Body of pancreas (tissue), 4 donors: ENCODE measurements at regions of chr14 and their contacts with region 1.

Region 1: DNA sequence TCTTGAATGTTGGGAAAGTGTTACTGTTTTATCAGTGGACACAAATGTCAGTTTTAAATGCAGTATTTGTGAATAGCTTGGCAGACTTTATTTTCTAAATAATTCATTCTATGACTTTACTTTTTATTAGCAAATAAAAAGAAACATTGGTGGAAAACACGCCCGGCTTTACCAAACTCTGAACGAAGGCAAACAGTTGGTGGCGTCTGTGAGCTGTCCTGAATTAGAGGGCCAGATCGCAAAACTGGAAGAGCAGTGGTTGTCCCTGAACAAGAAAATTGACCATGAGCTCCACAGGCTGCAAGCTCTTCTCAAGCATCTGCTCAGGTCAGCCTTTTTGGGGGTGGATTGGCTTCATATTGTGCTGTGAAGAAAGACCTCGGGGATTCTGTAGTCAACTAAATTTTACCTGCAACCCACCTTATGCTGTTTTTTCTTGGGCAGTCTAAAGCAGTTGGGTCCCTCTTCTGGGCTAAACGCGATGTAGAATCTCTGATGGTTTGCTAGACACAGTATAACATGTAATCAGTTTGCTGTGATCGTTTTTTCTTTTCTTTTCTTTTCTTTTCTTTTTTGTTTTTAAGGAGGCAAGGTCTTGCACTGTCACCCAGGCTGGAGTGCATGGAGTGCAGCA is 156.4 kb downstream of the ESR2 start:
- DNase-seq: peak; percentile 27 to 60 (median 48)
- ATAC-seq: no peak
- H3K4me3 ChIP-seq: no peak overlapping the region
- H3K27ac ChIP-seq: no peak overlapping the region
- H3K4me1 ChIP-seq: no peaks in the 10 kb centered on the region
- H3K27me3 ChIP-seq: no peaks in the 10 kb centered on the region
- CTCF ChIP-seq: peak; percentile 10 to 66 (median 44)
- POLR2A ChIP-seq: no peak

Region 2: GRCh38 chr14:64294672-64295413 is 157.1 kb after region 1 on chr14:
- intact Hi-C with region 1: loop called (anchors 5 kb)
- DNase-seq: peak; percentile 81 to 89 (median 84)
- ATAC-seq: peak; percentile 86
- H3K4me3 ChIP-seq: peak overlapping the region in 1 of 2 donors; percentile 44
- H3K27ac ChIP-seq: no peak overlapping the region
- H3K4me1 ChIP-seq: peaks cover 19% of the 10 kb centered on the region
- H3K27me3 ChIP-seq: no peaks in the 10 kb centered on the region
- CTCF ChIP-seq: peak; percentile 79 to 92 (median 89)
- POLR2A ChIP-seq: no peak

Region 3: GRCh38 chr14:64363265-64363846 is 225.6 kb after region 1 on chr14:
- intact Hi-C with region 1: no loop called
- DNase-seq: no peak
- ATAC-seq: no peak
- H3K4me3 ChIP-seq: no peak overlapping the region
- H3K27ac ChIP-seq: no peak overlapping the region
- H3K4me1 ChIP-seq: no peaks in the 10 kb centered on the region
- H3K27me3 ChIP-seq: no peaks in the 10 kb centered on the region
- CTCF ChIP-seq: no peak
- POLR2A ChIP-seq: no peak

Region 4: GRCh38 chr14:64540208-64541157 is 402.7 kb after region 1 on chr14 and contains the start of gene HSPA2:
- intact Hi-C with region 1: no loop called
- DNase-seq: peak; percentile 99 to 100 (median 100)
- ATAC-seq: peak; percentile 94
- H3K4me3 ChIP-seq: peak within 1 kb of the TSS; percentile 46 to 87
- H3K27ac ChIP-seq: peak within 1 kb of the TSS; percentile 77 to 91 (median 89)
- H3K4me1 ChIP-seq: peaks cover 16% of the 10 kb centered on the region
- H3K27me3 ChIP-seq: no peaks in the 10 kb centered on the region
- CTCF ChIP-seq: peak; percentile 62 to 98 (median 95)
- POLR2A ChIP-seq: peak; percentile 97 to 100 (median 99)
- total RNA-seq, gene HSPA2: 4.0 to 19.7 TPM